HCT116 (cell line): ENCODE measurements at regions of chr7 and their contacts with region 1.

Region 1: DNA sequence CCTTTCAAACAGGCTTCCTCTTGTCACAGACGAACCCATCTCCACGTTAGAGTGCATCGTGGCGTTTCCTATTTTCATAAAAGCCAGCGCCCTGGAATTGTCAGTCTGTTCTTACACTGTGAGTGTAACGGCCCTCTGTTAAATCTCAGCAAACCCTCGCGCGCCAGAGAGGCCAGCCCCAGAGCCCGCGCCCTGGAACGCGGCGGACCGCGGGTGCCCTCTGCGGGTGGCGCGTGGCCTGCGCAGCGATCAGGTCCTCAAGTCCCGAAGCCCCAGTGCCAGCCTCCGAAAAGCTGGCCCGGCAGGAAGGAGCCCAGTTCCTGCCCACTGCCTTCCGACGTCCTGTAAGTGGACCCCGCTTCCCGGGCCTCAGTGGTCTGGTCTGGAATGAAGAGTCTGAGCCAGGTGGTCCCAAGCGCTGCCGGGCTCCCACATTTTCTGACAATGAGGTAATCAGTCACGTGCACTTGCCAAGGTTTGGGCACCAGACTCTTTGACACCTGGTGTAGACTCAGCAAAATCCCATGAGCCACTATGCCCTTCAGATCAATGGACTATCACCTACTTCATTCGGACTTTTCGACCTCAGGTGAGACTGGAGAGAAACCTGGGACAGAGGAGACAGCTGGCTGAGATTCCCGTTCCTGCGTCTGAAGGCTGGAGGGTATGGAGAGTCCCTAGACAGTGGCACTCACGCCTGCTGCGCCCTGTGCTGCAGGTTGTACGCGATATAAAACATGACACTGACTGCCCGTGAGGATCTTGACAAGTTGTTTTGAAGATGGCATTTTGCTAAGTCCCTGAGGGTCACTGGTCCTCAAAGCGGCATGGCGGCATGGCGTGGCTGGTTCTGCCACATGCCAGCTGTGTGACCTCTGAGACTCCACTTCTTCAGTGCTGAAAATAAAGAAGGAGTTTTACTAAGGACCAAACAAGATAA is 109.4 kb upstream of the LANCL2 start:
- DNase-seq: peak; percentile 60
- ATAC-seq: peak; percentile 86
- H3K4me3 ChIP-seq: peak overlapping the region; percentile 44 to 62
- H3K27ac ChIP-seq: no peak overlapping the region
- H3K4me1 ChIP-seq: peaks cover 2 to 17% of the 10 kb centered on the region in 2 experiments; a peak in 2 of 4 replicates
- H3K27me3 ChIP-seq: no peaks in the 10 kb centered on the region
- CTCF ChIP-seq: peak; percentile 86 to 95 (median 90)
- POLR2A ChIP-seq: no peak
- RAD21 ChIP-seq: peak; percentile 95

Region 2: DNA sequence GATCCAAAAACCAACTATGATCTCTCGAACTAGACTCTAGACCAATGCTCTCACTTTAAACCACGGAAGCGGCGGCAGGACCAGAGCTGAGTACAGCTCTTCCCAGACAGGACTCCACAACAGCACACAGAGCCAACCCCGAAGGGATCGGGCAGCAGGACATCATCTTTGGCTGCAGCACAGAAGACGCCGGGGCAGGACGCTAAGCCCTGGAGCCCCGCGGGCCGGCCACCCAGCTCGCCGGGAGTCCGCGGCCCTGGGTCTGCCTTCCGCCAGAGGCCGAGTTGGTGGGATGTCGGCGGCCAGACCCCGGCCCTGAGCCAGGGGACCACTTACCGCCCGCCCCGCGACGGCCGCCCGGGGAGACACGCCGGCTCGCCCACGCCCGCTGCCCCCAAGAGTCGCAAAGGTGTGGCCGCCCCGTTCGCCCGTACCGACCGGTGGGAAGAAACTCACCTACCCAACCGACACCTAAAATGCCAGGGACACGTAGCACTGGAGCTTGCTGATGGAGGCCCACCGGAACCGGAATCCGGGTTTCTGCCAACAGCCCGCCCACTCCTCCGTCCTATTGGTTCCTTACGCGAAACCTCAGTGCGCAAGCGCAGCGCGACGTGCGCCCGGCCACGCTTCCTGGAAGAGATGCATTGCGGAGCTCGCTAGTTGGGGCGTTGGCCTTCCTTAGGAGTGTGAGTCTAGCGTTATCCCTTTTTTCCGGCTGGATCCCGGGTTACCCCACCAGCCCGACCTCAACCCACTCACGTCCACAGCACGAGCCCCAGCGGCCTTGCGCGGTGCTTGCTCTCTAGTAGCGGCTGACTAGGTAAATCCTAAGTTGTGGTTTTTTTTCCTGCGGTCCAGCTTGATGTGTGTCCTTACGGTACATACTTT is 496.8 kb before region 1 on chr7 and contains the start of gene SEC61G:
- CTCF ChIA-PET with region 1: interaction called, 19 read pairs
- POLR2A ChIA-PET with region 1: interaction called, 3 read pairs
- RAD21 ChIA-PET with region 1: interaction called in 1 of 2 experiments, 7 read pairs
- intact Hi-C with region 1: no loop called
- DNase-seq: peak; percentile 94
- ATAC-seq: peak; percentile 96
- H3K4me3 ChIP-seq: peak within 1 kb of the TSS; percentile 90 to 95
- H3K27ac ChIP-seq: peak within 1 kb of the TSS; percentile 87
- H3K4me1 ChIP-seq: peaks cover 8 to 17% of the 10 kb centered on the region in 2 experiments
- H3K27me3 ChIP-seq: no peaks in the 10 kb centered on the region
- CTCF ChIP-seq: no peak
- POLR2A ChIP-seq: peak; percentile 95
- RAD21 ChIP-seq: no peak
- total RNA-seq, gene SEC61G: 147 TPM

Region 3: GRCh38 chr7:54788664-54789063 is 467.1 kb before region 1 on chr7:
- CTCF ChIA-PET with region 1: interaction called, 40 read pairs
- POLR2A ChIA-PET with region 1: no interaction called
- RAD21 ChIA-PET with region 1: interaction called, 11 to 13 read pairs
- intact Hi-C with region 1: loop called (anchors 1 kb)
- DNase-seq: peak; percentile 95
- ATAC-seq: peak; percentile 99
- H3K4me3 ChIP-seq: no peak overlapping the region
- H3K27ac ChIP-seq: no peak overlapping the region
- H3K4me1 ChIP-seq: peaks cover 2 to 18% of the 10 kb centered on the region in 2 experiments; a peak in 3 of 4 replicates
- H3K27me3 ChIP-seq: no peaks in the 10 kb centered on the region
- CTCF ChIP-seq: peak; percentile 65 to 90 (median 73)
- POLR2A ChIP-seq: no peak
- RAD21 ChIP-seq: peak; percentile 96

Region 4: DNA sequence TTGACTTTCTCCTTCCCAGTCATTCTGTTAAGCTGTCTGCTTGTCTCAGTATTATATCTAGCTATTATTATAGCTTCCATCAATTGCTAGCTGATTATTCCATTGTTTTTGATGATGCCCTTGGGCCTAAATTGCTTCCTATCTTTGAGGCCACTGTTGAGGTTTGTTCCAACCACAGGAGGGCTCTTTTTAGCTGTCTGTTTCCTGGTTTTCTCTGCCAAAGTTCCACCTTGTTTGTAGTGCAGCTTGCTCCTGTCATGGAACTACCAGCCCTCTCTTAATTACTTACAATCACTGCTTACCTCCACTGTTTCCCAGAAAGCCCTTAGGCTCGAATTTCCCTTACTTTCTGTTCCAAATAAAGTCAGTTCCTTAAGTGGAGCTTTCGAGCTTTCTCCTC is 378.1 kb before region 1 on chr7:
- CTCF ChIA-PET with region 1: interaction called, 18 read pairs
- POLR2A ChIA-PET with region 1: interaction called, 3 read pairs
- RAD21 ChIA-PET with region 1: no interaction called
- intact Hi-C with region 1: no loop called
- DNase-seq: peak; percentile 7
- ATAC-seq: peak; percentile 57
- H3K4me3 ChIP-seq: no peak overlapping the region
- H3K27ac ChIP-seq: no peak overlapping the region
- H3K4me1 ChIP-seq: peaks cover 0 to 7% of the 10 kb centered on the region in 2 experiments; a peak in 1 of 4 replicates
- H3K27me3 ChIP-seq: no peaks in the 10 kb centered on the region
- CTCF ChIP-seq: peak in 2 of 3 experiments; percentile 6 to 17; a peak in 1 of 6 replicates
- POLR2A ChIP-seq: no peak
- RAD21 ChIP-seq: peak; percentile 63

Region 5: DNA sequence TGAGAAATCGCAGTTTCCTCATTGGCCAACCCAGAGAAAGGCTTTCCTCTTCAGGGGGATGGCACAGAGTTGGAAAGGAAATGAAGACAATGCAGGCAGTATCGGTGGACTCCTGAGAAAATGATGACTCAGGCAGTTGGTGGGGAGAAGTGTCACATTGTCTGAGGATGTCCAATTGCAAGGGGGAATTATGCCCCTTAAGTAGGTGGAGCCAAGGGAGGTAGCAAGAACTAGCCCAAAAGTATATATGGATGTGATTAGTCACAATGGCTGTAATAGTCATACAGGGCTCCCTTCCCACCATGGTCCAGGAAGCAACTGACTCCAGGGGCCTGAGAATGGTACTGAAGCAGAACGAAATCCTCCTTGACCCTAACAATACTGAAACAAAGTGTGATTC is 295.2 kb before region 1 on chr7:
- CTCF ChIA-PET with region 1: no interaction called
- POLR2A ChIA-PET with region 1: no interaction called
- RAD21 ChIA-PET with region 1: no interaction called
- intact Hi-C with region 1: no loop called
- DNase-seq: no peak
- ATAC-seq: 0 out of 2 replicates have a peak, but pooled peaks have one; percentile 42
- H3K4me3 ChIP-seq: no peak overlapping the region
- H3K27ac ChIP-seq: no peak overlapping the region
- H3K4me1 ChIP-seq: peaks cover 6 to 13% of the 10 kb centered on the region in 2 experiments; a peak in 3 of 4 replicates
- H3K27me3 ChIP-seq: no peaks in the 10 kb centered on the region
- CTCF ChIP-seq: no peak
- POLR2A ChIP-seq: no peak
- RAD21 ChIP-seq: no peak

Region 6: DNA sequence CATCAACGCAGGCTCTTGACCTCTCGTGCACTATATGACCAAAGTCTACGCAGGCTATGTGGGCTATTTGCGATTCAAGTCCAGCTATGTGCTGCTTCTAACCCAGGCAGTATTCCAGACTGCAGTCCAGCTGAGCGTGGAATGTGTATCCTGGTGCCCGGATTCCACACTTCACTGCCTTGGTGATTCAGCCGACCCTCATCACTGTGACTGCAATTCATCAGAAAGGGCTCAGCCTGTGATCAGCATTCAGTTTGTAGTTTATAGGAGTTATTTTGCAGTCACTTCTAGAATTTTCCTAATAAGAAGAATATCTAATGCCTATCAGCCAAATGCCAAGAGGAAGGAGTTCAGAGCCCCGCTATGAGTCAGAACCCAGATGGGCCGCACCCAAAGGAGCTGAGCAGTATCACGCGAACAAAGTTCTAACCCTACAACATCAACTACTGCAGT is 10.5 kb before region 1 on chr7:
- CTCF ChIA-PET with region 1: interaction called, 10 read pairs
- POLR2A ChIA-PET with region 1: no interaction called
- RAD21 ChIA-PET with region 1: no interaction called
- intact Hi-C with region 1: no loop called
- DNase-seq: no peak
- ATAC-seq: peak; percentile 57
- H3K4me3 ChIP-seq: no peak overlapping the region
- H3K27ac ChIP-seq: no peak overlapping the region
- H3K4me1 ChIP-seq: peaks cover 11 to 35% of the 10 kb centered on the region in 2 experiments
- H3K27me3 ChIP-seq: no peaks in the 10 kb centered on the region
- CTCF ChIP-seq: no peak
- POLR2A ChIP-seq: no peak
- RAD21 ChIP-seq: no peak